ENCODE measurements at regions of chr1 and their contacts with region 1.

Region 1: GRCh38 chr1:40825435-40825788 is 36.8 kb downstream of the CITED4 start:
- DNase-seq: no peak
- H3K4me3 ChIP-seq: no peak overlapping the region
- H3K27ac ChIP-seq: peak overlapping the region; percentile 79 to 83
- H3K4me1 ChIP-seq: peaks cover 24 to 41% of the 10 kb centered on the region in 2 donors
- H3K27me3 ChIP-seq: no peaks in the 10 kb centered on the region
- CTCF ChIP-seq: no peak

Region 2: DNA sequence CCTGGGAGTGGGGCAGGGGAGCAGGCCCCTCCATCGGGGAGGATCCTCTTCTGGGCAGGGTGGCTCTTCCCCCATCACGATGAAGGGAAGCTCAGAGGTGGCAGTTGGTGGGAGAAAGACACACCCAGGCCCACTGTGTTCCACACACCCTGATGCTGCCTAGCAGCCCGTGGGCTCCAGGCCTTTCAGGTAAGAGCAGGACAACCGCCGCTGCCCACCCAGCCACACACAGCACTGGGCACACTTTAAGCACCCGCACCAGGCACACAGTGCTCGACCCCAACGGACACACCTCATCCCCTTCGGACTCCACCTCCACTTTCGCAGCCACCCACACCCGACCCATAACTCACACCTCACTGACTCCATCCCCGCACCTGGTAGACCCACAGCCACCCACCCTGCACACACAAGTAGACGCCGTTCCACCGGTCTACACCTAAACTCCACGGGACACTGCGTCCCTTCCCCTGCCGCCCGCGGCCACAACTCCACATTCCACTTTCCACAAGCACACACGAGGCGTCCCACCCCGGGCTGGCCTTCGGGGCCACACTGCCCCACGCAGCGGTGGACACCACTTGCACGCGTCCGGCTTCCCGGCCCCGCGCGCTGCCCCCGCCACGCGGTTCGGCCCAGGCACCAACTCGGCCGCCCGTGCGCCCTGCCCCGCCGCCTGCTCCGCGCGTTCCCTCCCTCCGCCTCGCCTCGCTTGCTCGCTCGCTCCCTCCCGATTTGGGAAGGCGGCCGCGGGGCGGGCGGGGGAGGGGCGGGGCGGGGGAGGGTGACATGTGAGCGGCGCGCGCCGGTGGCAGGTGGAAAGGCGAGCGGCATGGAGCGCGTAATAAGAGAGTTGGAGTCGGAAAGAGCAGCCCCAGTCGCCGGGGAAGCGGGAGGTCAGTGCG is 42.2 kb before region 1 on chr1 and contains the start of gene KCNQ4:
- intact Hi-C with region 1: loop called (anchors 2 kb)
- DNase-seq: peak in 1 of 2 donors; percentile 84
- H3K4me3 ChIP-seq: peak within 1 kb of the TSS; percentile 65 to 69
- H3K27ac ChIP-seq: peak within 1 kb of the TSS; percentile 82 to 91
- H3K4me1 ChIP-seq: peaks cover 6 to 22% of the 10 kb centered on the region in 2 donors
- H3K27me3 ChIP-seq: no peaks in the 10 kb centered on the region
- CTCF ChIP-seq: no peak
- total RNA-seq, gene KCNQ4: 14.5 TPM

Region 3: GRCh38 chr1:40802078-40802741 is 23.2 kb before region 1 on chr1:
- intact Hi-C with region 1: loop called (anchors 2 kb)
- DNase-seq: peak; percentile 49 to 92
- H3K4me3 ChIP-seq: peak overlapping the region; percentile 36 to 59
- H3K27ac ChIP-seq: peak overlapping the region; percentile 84 to 95
- H3K4me1 ChIP-seq: peaks cover 31 to 50% of the 10 kb centered on the region in 2 donors
- H3K27me3 ChIP-seq: no peaks in the 10 kb centered on the region
- CTCF ChIP-seq: no peak

Region 4: GRCh38 chr1:40939320-40940059 is 114.1 kb after region 1 on chr1:
- intact Hi-C with region 1: no loop called
- DNase-seq: peak in 1 of 2 donors; percentile 68
- H3K4me3 ChIP-seq: no peak overlapping the region
- H3K27ac ChIP-seq: peak overlapping the region in 1 of 2 donors; percentile 54
- H3K4me1 ChIP-seq: peaks cover 8 to 58% of the 10 kb centered on the region in 2 donors
- H3K27me3 ChIP-seq: no peaks in the 10 kb centered on the region
- CTCF ChIP-seq: no peak

Measured in ascending aorta (tissue), 2 donors.